ENCODE measurements at regions of chr15 and their contacts with region 1.

Region 1: DNA sequence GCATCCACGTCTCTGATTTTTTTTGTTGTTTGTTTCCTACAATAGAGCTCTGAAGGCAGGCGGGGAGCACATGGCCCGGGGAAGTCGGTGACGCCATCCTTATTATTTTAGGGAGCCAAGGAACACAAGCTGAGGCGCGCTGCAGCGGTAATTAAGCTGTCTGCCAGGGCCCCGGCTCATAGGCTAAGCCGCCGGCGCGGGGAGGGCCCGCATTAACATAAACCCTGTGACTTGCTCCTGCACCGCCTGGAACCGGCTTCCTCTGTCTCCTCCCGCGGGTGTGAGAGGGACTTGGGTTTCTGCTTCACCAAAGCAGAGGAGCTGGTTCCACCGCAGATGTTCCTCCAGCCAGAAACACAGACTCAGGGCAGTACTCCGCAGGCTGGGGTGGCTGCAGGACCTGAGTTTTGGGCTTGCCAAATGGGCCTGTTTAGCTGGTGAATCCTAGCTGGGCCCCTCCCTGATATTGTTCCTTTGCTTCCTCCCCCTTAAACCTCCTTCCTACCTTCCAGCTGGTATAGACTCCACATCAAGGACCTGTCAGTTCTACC is 25.3 kb downstream of the ANP32A start:
- DNase-seq: no peak
- ATAC-seq: no peak
- H3K4me3 ChIP-seq: no peak overlapping the region
- H3K27ac ChIP-seq: no peak overlapping the region
- H3K4me1 ChIP-seq: peaks cover 26% of the 10 kb centered on the region; the same call in 1 of the 3 replicates
- CTCF ChIP-seq: no peak
- EP300 ChIP-seq: no peak
- POLR2A ChIP-seq: no peak
- RAD21 ChIP-seq: no peak

Region 2: DNA sequence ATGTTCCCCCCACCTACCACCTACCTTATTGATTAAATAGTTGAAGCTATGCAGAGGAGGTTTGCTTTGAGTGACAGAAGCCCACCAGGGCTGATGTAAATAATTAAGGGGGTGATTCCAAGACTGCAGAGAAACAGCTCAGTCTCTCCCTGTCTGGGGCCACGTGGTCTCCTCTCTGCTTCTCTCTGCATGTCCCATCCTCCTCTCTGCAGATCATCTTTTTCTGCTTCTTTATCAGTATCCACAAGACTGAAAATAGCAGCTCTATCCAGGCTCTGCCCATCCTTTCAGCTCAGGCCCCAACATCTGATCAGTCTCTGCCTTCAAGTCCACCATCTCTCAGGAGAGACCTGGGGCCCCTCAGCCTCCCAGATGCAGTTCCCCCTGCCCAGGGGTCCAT is 85.5 kb before region 1 on chr15:
- CTCF ChIA-PET with region 1: no interaction called
- POLR2A ChIA-PET with region 1: interaction called, 11 read pairs
- DNase-seq: no peak
- ATAC-seq: no peak
- H3K4me3 ChIP-seq: no peak overlapping the region
- H3K27ac ChIP-seq: no peak overlapping the region
- H3K4me1 ChIP-seq: no peaks in the 10 kb centered on the region
- CTCF ChIP-seq: no peak
- EP300 ChIP-seq: no peak
- POLR2A ChIP-seq: no peak
- RAD21 ChIP-seq: no peak

Region 3: DNA sequence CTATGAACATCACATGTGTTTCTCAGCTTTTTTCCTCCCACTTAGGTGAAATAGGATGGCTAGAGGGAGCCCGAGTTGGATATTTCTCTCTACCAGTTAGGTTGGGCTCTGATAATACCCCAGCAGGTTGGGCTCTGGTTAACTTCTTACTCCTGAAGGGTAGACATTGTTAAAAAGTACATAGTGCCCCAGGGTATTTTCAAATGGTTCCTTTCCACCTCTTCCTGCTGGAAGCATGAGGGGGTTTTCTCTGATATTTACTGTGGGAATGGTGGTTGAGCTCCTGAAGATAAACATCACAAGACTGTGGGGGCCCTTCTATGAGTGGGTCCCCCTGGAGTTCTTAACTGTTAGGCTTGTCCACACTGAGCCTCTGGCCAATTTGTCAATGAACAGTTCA is 98.8 kb after region 1 on chr15:
- CTCF ChIA-PET with region 1: no interaction called
- POLR2A ChIA-PET with region 1: no interaction called
- DNase-seq: no peak
- ATAC-seq: 0 out of 6 replicates have a peak, but pooled peaks of 1 of the 2 experiments have one; percentile 30
- H3K4me3 ChIP-seq: no peak overlapping the region
- H3K27ac ChIP-seq: no peak overlapping the region
- H3K4me1 ChIP-seq: no peaks in the 10 kb centered on the region
- CTCF ChIP-seq: no peak
- EP300 ChIP-seq: no peak
- POLR2A ChIP-seq: no peak
- RAD21 ChIP-seq: no peak

Measured in A549 (cell line).